CD8-positive, alpha-beta T cell (primary cell): ENCODE measurements at regions of chr20 and their contacts with region 1.

Region 1: GRCh38 chr20:18793625-18794427 is 19.8 kb upstream of the SCP2D1 start:
- DNase-seq: peak; percentile 78 to 98 (median 88)
- ATAC-seq: peak; percentile 93
- H3K4me3 ChIP-seq: peak overlapping the region; percentile 73 to 79
- H3K4me3 Mint-ChIP-seq: peak overlapping the region; percentile 96
- H3K27ac ChIP-seq: peak overlapping the region; percentile 94 to 95
- H3K27ac Mint-ChIP-seq: peak overlapping the region; percentile 100
- H3K4me1 ChIP-seq: peaks cover 12% of the 10 kb centered on the region
- H3K4me1 Mint-ChIP-seq: peaks cover 17% of the 10 kb centered on the region
- H3K27me3 ChIP-seq: no peaks in the 10 kb centered on the region
- H3K27me3 Mint-ChIP-seq: peaks cover 19% of the 10 kb centered on the region
- CTCF ChIP-seq: no peak

Region 2: GRCh38 chr20:17873410-17874270 is 920.2 kb before region 1 on chr20:
- CTCF ChIA-PET with region 1: no interaction called
- POLR2A ChIA-PET with region 1: no interaction called
- intact Hi-C with region 1: no loop called
- DNase-seq: no peak
- ATAC-seq: no peak
- H3K4me3 ChIP-seq: no peak overlapping the region
- H3K4me3 Mint-ChIP-seq: no peak overlapping the region
- H3K27ac ChIP-seq: no peak overlapping the region
- H3K27ac Mint-ChIP-seq: no peak overlapping the region
- H3K4me1 ChIP-seq: no peaks in the 10 kb centered on the region
- H3K4me1 Mint-ChIP-seq: peaks cover 15% of the 10 kb centered on the region
- H3K27me3 ChIP-seq: no peaks in the 10 kb centered on the region
- H3K27me3 Mint-ChIP-seq: peaks cover 7% of the 10 kb centered on the region
- CTCF ChIP-seq: no peak

Region 3: GRCh38 chr20:18466894-18467730 is 326.7 kb before region 1 on chr20 and contains the starts of genes DZANK1 and POLR3F:
- CTCF ChIA-PET with region 1: no interaction called
- POLR2A ChIA-PET with region 1: interaction called, 9 read pairs
- intact Hi-C with region 1: loop called in 1 of 2 experiments (anchors 10 kb)
- DNase-seq: peak; percentile 84 to 95 (median 93)
- ATAC-seq: peak; percentile 90
- H3K4me3 ChIP-seq: peak within 1 kb of the TSS; percentile 79 to 93
- H3K4me3 Mint-ChIP-seq: peak within 1 kb of the TSS; percentile 97
- H3K27ac ChIP-seq: peak within 1 kb of the TSS; percentile 73 to 92
- H3K27ac Mint-ChIP-seq: peak within 1 kb of the TSS; percentile 97
- H3K4me1 ChIP-seq: peaks cover 16% of the 10 kb centered on the region
- H3K4me1 Mint-ChIP-seq: peaks cover 24% of the 10 kb centered on the region
- H3K27me3 ChIP-seq: no peaks in the 10 kb centered on the region
- H3K27me3 Mint-ChIP-seq: no peaks in the 10 kb centered on the region
- CTCF ChIP-seq: no peak
- total RNA-seq, gene DZANK1: 2.0 to 2.3 TPM
- total RNA-seq, gene POLR3F: 11.5 TPM

Region 4: GRCh38 chr20:18507218-18508021 is 286.4 kb before region 1 on chr20 and contains the start of gene SEC23B:
- CTCF ChIA-PET with region 1: interaction called, 3 read pairs
- POLR2A ChIA-PET with region 1: interaction called, 6 read pairs
- intact Hi-C with region 1: loop called (anchors 1 to 5 kb)
- DNase-seq: peak; percentile 96 to 100 (median 98)
- ATAC-seq: peak; percentile 82
- H3K4me3 ChIP-seq: peak within 1 kb of the TSS; percentile 63 to 87
- H3K4me3 Mint-ChIP-seq: peak within 1 kb of the TSS; percentile 100
- H3K27ac ChIP-seq: peak within 1 kb of the TSS; percentile 97 to 100
- H3K27ac Mint-ChIP-seq: peak within 1 kb of the TSS; percentile 100
- H3K4me1 ChIP-seq: peaks cover 17% of the 10 kb centered on the region
- H3K4me1 Mint-ChIP-seq: peaks cover 47% of the 10 kb centered on the region
- H3K27me3 ChIP-seq: no peaks in the 10 kb centered on the region
- H3K27me3 Mint-ChIP-seq: no peaks in the 10 kb centered on the region
- CTCF ChIP-seq: no peak
- total RNA-seq, gene SEC23B: 31.5 to 31.8 TPM

Region 5: GRCh38 chr20:18553746-18554145 is 240.1 kb before region 1 on chr20:
- CTCF ChIA-PET with region 1: no interaction called
- POLR2A ChIA-PET with region 1: no interaction called
- intact Hi-C with region 1: no loop called
- DNase-seq: no peak
- ATAC-seq: no peak
- H3K4me3 ChIP-seq: no peak overlapping the region
- H3K4me3 Mint-ChIP-seq: no peak overlapping the region
- H3K27ac ChIP-seq: no peak overlapping the region
- H3K27ac Mint-ChIP-seq: no peak overlapping the region
- H3K4me1 ChIP-seq: no peaks in the 10 kb centered on the region
- H3K4me1 Mint-ChIP-seq: no peaks in the 10 kb centered on the region
- H3K27me3 ChIP-seq: no peaks in the 10 kb centered on the region
- H3K27me3 Mint-ChIP-seq: no peaks in the 10 kb centered on the region
- CTCF ChIP-seq: no peak

Region 6: GRCh38 chr20:18587665-18588573 is 205.9 kb before region 1 on chr20 and contains the start of gene DTD1:
- CTCF ChIA-PET with region 1: no interaction called
- POLR2A ChIA-PET with region 1: interaction called, 6 read pairs
- intact Hi-C with region 1: loop called (anchors 1 to 5 kb)
- DNase-seq: peak; percentile 53 to 89 (median 82)
- ATAC-seq: peak; percentile 82
- H3K4me3 ChIP-seq: peak within 1 kb of the TSS; percentile 65 to 83
- H3K4me3 Mint-ChIP-seq: peak within 1 kb of the TSS; percentile 95
- H3K27ac ChIP-seq: peak within 1 kb of the TSS; percentile 56 to 83
- H3K27ac Mint-ChIP-seq: peak within 1 kb of the TSS; percentile 94
- H3K4me1 ChIP-seq: peaks cover 18% of the 10 kb centered on the region
- H3K4me1 Mint-ChIP-seq: peaks cover 32% of the 10 kb centered on the region
- H3K27me3 ChIP-seq: no peaks in the 10 kb centered on the region
- H3K27me3 Mint-ChIP-seq: peaks cover 6% of the 10 kb centered on the region
- CTCF ChIP-seq: peak; percentile 45
- total RNA-seq, gene DTD1: 12.5 to 14.5 TPM

Region 7: DNA sequence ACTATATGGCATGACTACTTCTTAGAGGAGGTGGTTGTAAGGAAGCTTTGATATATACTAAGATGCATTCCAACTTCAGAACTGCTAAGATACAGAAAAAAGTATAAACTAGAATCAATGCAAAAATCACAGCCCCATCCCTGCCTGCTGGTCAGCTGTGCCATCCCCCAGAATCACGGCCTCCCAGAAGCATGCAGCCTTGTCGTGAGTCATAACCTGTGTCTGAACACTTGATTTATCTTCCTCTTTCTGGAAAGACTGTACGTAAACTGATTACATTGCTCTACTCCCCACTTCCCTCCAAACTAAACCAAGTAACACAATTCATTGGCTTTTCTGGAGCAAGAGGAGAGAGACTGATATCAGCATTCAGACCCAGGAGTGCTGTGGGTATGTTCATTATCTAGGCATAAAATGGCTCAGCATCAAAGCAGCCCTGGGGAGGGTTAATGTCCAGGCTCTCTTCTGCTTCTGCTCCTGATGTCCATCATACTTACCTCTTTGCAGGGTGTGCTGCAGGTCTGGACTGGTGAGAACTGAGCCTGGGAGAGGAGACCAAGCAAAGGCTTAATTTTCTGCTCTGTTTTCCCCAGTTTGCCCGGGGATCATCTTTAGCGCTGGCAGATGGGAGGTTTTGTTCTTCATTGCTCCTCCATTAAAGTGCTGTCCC is 38.1 kb after region 1 on chr20:
- CTCF ChIA-PET with region 1: no interaction called
- POLR2A ChIA-PET with region 1: no interaction called
- intact Hi-C with region 1: no loop called
- DNase-seq: no peak
- ATAC-seq: no peak
- H3K4me3 ChIP-seq: no peak overlapping the region
- H3K4me3 Mint-ChIP-seq: no peak overlapping the region
- H3K27ac ChIP-seq: no peak overlapping the region
- H3K27ac Mint-ChIP-seq: no peak overlapping the region
- H3K4me1 ChIP-seq: no peaks in the 10 kb centered on the region
- H3K4me1 Mint-ChIP-seq: no peaks in the 10 kb centered on the region
- H3K27me3 ChIP-seq: no peaks in the 10 kb centered on the region
- H3K27me3 Mint-ChIP-seq: peaks cover 8% of the 10 kb centered on the region
- CTCF ChIP-seq: no peak

Region 8: DNA sequence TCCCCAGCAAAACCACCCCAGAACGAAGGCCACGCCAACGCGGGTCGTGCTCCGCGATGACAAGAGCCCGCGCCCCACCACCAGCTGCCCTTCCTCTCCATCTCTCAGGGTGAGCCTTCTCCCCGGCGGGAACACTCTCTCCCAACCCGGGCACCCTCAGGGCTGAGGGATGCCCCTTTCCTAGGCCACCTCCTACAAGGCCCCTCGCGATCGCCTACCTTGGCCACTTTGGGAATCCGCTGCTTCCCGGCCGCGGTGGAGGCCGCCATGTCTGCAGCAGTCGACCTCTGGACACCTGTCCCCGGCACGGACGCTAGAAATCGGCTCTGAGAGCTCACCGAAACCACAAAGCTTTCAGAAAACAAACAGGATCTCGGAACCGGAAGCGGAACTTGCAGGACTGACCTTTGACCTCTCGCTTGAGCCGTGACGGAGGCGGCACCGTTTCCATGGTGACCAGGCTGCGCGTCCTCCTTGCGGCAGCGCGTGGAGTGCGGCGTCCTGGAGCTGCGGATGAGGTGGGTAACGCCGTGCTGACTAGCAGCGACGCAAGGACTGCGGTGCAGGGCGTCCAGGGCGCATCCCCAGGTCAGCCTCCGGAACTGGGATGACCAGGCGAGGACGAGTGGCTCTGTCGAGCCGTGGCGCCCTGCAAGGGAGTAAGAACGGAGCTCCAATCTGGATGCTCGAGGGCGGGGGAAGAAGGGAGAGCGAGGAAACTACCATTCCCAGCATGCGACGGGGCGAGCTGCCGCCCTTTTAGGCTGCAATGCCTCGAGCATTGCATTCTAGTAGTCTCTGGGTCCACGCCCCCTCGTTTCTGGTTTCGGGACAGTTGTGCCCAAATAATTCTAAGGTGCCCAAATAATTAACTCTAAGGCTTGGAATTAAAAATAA is 1258.5 kb after region 1 on chr20 and contains the starts of genes CFAP61 and CRNKL1:
- CTCF ChIA-PET with region 1: no interaction called
- POLR2A ChIA-PET with region 1: no interaction called
- intact Hi-C with region 1: loop called (anchors 10 kb)
- DNase-seq: peak; percentile 93 to 99 (median 98)
- ATAC-seq: peak; percentile 94
- H3K4me3 ChIP-seq: peak within 1 kb of the TSS; percentile 86 to 96
- H3K4me3 Mint-ChIP-seq: peak within 1 kb of the TSS; percentile 99
- H3K27ac ChIP-seq: peak within 1 kb of the TSS; percentile 86 to 92
- H3K27ac Mint-ChIP-seq: peak within 1 kb of the TSS; percentile 98
- H3K4me1 ChIP-seq: peaks cover 12% of the 10 kb centered on the region
- H3K4me1 Mint-ChIP-seq: peaks cover 29% of the 10 kb centered on the region
- H3K27me3 ChIP-seq: no peaks in the 10 kb centered on the region
- H3K27me3 Mint-ChIP-seq: peaks cover 10% of the 10 kb centered on the region
- CTCF ChIP-seq: no peak
- total RNA-seq, gene CFAP61: not detected
- total RNA-seq, gene CRNKL1: 34.1 to 39.7 TPM